Mammary epithelial cell (primary cell): ENCODE measurements at regions of chr11 and their contacts with region 1.

Region 1: GRCh38 chr11:18395735-18396504 is 1.6 kb downstream of the LDHA start:
- DNase-seq: peak; percentile 96
- H3K4me3 ChIP-seq: peak overlapping the region; percentile 85 to 99 (median 90)
- H3K27ac ChIP-seq: peak overlapping the region; percentile 91
- H3K4me1 ChIP-seq: peaks cover 36% of the 10 kb centered on the region
- H3K27me3 ChIP-seq: no peaks in the 10 kb centered on the region
- CTCF ChIP-seq: no peak

Region 2: GRCh38 chr11:18145025-18145424 is 250.9 kb before region 1 on chr11:
- CTCF ChIA-PET with region 1: no interaction called
- dilution Hi-C with region 1: no loop called
- in situ Hi-C with region 1: no loop called
- intact Hi-C with region 1: no loop called
- DNase-seq: no peak
- H3K4me3 ChIP-seq: no peak overlapping the region
- H3K27ac ChIP-seq: no peak overlapping the region
- H3K4me1 ChIP-seq: peaks cover 10% of the 10 kb centered on the region
- H3K27me3 ChIP-seq: no peaks in the 10 kb centered on the region
- CTCF ChIP-seq: no peak

Region 3: GRCh38 chr11:18243783-18244362 is 152.0 kb before region 1 on chr11:
- CTCF ChIA-PET with region 1: no interaction called
- dilution Hi-C with region 1: no loop called
- in situ Hi-C with region 1: no loop called
- intact Hi-C with region 1: loop called (anchors 2 kb)
- DNase-seq: peak; percentile 55
- H3K4me3 ChIP-seq: no peak overlapping the region
- H3K27ac ChIP-seq: no peak overlapping the region
- H3K4me1 ChIP-seq: peaks cover 6% of the 10 kb centered on the region
- H3K27me3 ChIP-seq: no peaks in the 10 kb centered on the region
- CTCF ChIP-seq: peak; percentile 91

Region 4: DNA sequence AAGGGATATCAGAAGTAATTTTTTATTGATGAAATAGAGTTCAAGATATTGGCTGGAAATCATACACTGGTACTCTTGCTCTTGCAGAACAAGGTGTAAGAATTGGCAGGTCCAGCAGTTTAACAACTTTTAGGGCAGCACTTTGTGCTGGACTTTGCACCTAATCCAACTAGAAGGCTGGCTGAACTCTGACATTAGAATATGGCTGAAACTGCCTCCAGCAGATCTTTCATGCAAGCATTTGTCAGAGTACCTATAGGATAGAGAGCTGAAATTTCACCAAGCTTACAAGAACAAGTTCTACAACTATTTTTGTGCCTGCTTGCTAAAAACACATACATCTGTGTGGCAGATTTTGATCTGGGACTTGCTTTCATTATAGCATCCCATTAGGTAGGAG is 91.2 kb before region 1 on chr11:
- CTCF ChIA-PET with region 1: no interaction called
- dilution Hi-C with region 1: no loop called
- in situ Hi-C with region 1: no loop called
- intact Hi-C with region 1: no loop called
- DNase-seq: no peak
- H3K4me3 ChIP-seq: no peak overlapping the region
- H3K27ac ChIP-seq: no peak overlapping the region
- H3K4me1 ChIP-seq: peaks cover 14% of the 10 kb centered on the region
- H3K27me3 ChIP-seq: no peaks in the 10 kb centered on the region
- CTCF ChIP-seq: no peak

Region 5: GRCh38 chr11:18321980-18322711 is 73.8 kb before region 1 on chr11 and contains the starts of genes GTF2H1 and HPS5:
- CTCF ChIA-PET with region 1: no interaction called
- dilution Hi-C with region 1: no loop called
- in situ Hi-C with region 1: no loop called
- intact Hi-C with region 1: loop called (anchors 1 kb)
- DNase-seq: peak; percentile 98
- H3K4me3 ChIP-seq: peak within 1 kb of the TSS; percentile 78 to 98 (median 94)
- H3K27ac ChIP-seq: peak within 1 kb of the TSS; percentile 93
- H3K4me1 ChIP-seq: peaks cover 31% of the 10 kb centered on the region
- H3K27me3 ChIP-seq: no peaks in the 10 kb centered on the region
- CTCF ChIP-seq: no peak
- total RNA-seq, gene GTF2H1: 67.5 to 98.9 TPM
- total RNA-seq, gene HPS5: 34.2 to 108 TPM

Region 6: DNA sequence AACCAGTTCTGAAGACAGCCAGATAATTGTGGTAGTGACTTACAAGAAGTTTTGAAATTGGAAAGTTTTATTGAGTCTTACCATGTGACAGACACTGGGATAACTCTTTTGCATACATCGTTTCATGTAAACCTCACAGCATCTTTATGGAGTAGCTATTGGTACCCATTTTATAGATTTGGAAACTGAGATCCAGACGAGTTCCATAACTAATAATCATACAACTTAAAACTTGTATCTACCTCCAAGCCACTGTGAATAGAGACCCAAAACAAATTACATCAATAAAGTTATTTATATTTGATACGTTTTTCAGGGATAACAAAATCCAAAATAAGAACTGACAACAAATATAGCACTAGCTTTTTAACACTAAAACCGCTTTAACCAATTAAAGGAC is 37.3 kb before region 1 on chr11:
- CTCF ChIA-PET with region 1: no interaction called
- dilution Hi-C with region 1: no loop called
- in situ Hi-C with region 1: no loop called
- intact Hi-C with region 1: loop called (anchors 5 kb)
- DNase-seq: no peak
- H3K4me3 ChIP-seq: no peak overlapping the region
- H3K27ac ChIP-seq: no peak overlapping the region
- H3K4me1 ChIP-seq: no peaks in the 10 kb centered on the region
- H3K27me3 ChIP-seq: no peaks in the 10 kb centered on the region
- CTCF ChIP-seq: no peak

Region 7: GRCh38 chr11:18368221-18368620 is 27.7 kb before region 1 on chr11:
- CTCF ChIA-PET with region 1: no interaction called
- dilution Hi-C with region 1: no loop called
- in situ Hi-C with region 1: no loop called
- intact Hi-C with region 1: loop called (anchors 1 kb)
- DNase-seq: peak; percentile 58
- H3K4me3 ChIP-seq: no peak overlapping the region
- H3K27ac ChIP-seq: no peak overlapping the region
- H3K4me1 ChIP-seq: peaks cover 3% of the 10 kb centered on the region
- H3K27me3 ChIP-seq: no peaks in the 10 kb centered on the region
- CTCF ChIP-seq: no peak

Region 8: GRCh38 chr11:18383388-18384156 is 12.3 kb before region 1 on chr11:
- CTCF ChIA-PET with region 1: no interaction called
- dilution Hi-C with region 1: no loop called
- in situ Hi-C with region 1: no loop called
- intact Hi-C with region 1: loop called (anchors 1 kb)
- DNase-seq: peak; percentile 100
- H3K4me3 ChIP-seq: peak overlapping the region in 2 of 3 experiments; percentile 7 to 11
- H3K27ac ChIP-seq: peak overlapping the region; percentile 96
- H3K4me1 ChIP-seq: peaks cover 24% of the 10 kb centered on the region
- H3K27me3 ChIP-seq: no peaks in the 10 kb centered on the region
- CTCF ChIP-seq: no peak

Region 9: DNA sequence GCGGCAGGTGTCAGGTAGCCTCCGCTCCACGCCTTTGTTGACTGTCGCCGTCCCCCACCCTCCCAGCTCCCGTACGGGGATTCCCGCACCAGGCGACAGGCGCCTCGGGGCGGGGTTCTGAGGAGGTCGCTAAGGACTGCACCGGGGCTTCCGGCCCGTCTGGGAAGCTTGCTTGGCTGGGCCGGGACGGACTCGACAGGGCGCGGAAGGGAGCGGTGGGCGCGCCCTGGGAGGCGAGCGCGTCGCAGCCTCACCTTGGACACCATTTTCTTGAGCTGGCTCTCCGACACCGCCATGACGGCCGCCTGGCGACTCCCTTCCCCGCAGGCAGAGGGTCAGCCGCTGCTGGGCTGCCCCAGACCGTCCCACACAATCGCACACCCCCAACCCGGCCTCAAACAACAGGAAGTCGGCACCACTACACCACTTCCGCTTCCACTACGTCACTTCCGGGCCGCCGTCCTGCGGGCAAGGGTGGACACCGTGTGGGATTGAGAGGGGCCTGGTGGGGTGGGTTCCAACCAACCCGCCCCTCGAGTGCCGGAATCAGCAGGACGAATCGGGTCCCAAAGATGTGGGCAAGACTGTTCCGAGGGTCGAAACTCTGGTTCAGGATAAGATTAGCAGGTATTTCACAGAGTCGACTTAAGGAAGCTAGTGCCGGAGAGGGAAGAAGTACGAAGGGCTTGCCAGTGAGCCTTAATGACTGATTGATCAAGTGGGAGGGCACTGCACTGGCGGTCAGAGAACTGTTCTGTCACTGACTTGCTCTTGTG is 130.8 kb after region 1 on chr11 and contains the start of gene TSG101:
- CTCF ChIA-PET with region 1: no interaction called
- dilution Hi-C with region 1: no loop called
- in situ Hi-C with region 1: no loop called
- intact Hi-C with region 1: loop called (anchors 5 kb)
- DNase-seq: peak; percentile 89
- H3K4me3 ChIP-seq: peak within 1 kb of the TSS; percentile 78 to 96 (median 79)
- H3K27ac ChIP-seq: peak within 1 kb of the TSS; percentile 96
- H3K4me1 ChIP-seq: peaks cover 8% of the 10 kb centered on the region
- H3K27me3 ChIP-seq: no peaks in the 10 kb centered on the region
- CTCF ChIP-seq: no peak
- total RNA-seq, gene TSG101: 54.1 to 72.3 TPM